ENCODE measurements at regions of chr1 and their contacts with region 1.

Region 1: GRCh38 chr1:160623862-160624261 is 23.0 kb downstream of the SLAMF1 start:
- DNase-seq: no peak
- ATAC-seq: no peak
- H3K4me3 ChIP-seq: peak overlapping the region in 1 of 5 experiments; percentile 58
- H3K4me3 Mint-ChIP-seq: peak overlapping the region; percentile 69
- H3K27ac ChIP-seq: peak overlapping the region; percentile 33 to 78
- H3K27ac Mint-ChIP-seq: peak overlapping the region; percentile 38
- H3K4me1 ChIP-seq: peaks cover 85 to 87% of the 10 kb centered on the region in 2 donors
- H3K4me1 Mint-ChIP-seq: peaks cover 94% of the 10 kb centered on the region
- H3K27me3 ChIP-seq: no peaks in the 10 kb centered on the region
- H3K27me3 Mint-ChIP-seq: no peaks in the 10 kb centered on the region
- CTCF ChIP-seq: no peak

Region 2: DNA sequence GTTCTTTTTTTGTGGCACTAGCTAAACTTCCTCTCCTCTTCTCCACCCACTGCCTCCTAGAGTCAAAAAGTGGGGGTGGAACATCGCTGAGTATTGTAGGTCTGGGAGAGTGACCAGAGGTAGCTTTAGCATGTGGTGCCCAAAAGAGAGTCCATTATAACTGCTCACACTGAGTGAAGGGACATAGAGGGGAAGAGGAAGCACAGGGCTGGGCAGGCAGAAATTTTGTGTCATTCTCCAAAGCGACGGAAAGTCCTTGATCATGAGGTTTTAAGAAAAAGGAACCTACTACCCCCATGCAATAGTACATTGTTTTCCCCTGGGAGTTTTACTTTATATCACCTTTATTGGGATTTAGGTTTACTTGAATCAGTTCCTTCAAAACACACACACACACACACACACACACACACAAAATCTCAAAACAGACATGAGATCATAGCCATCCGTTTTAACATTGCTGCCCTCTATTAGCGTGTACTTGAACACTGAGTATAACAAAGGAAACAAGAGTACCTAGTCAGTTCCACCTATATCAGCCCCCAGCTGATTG is 48.7 kb before region 1 on chr1:
- CTCF ChIA-PET with region 1: no interaction called
- POLR2A ChIA-PET with region 1: no interaction called
- intact Hi-C with region 1: no loop called
- DNase-seq: peak; percentile 78
- ATAC-seq: peak; percentile 74
- H3K4me3 ChIP-seq: peak overlapping the region in 3 of 5 experiments; percentile 9 to 89 (median 27)
- H3K4me3 Mint-ChIP-seq: peak overlapping the region; percentile 76
- H3K27ac ChIP-seq: peak overlapping the region; percentile 59 to 74
- H3K27ac Mint-ChIP-seq: peak overlapping the region; percentile 90
- H3K4me1 ChIP-seq: peaks cover 52 to 53% of the 10 kb centered on the region in 2 donors
- H3K4me1 Mint-ChIP-seq: peaks cover 76% of the 10 kb centered on the region
- H3K27me3 ChIP-seq: no peaks in the 10 kb centered on the region
- H3K27me3 Mint-ChIP-seq: no peaks in the 10 kb centered on the region
- CTCF ChIP-seq: no peak

Region 3: GRCh38 chr1:160637821-160638539 is 14.1 kb after region 1 on chr1:
- CTCF ChIA-PET with region 1: interaction called, 10 read pairs
- POLR2A ChIA-PET with region 1: interaction called, 10 read pairs
- intact Hi-C with region 1: loop called (anchors 1 kb)
- DNase-seq: peak; percentile 79
- ATAC-seq: peak; percentile 49
- H3K4me3 ChIP-seq: peak overlapping the region in 2 of 5 experiments; percentile 17 to 40
- H3K4me3 Mint-ChIP-seq: peak overlapping the region; percentile 65
- H3K27ac ChIP-seq: peak overlapping the region; percentile 72 to 83
- H3K27ac Mint-ChIP-seq: peak overlapping the region; percentile 88
- H3K4me1 ChIP-seq: peaks cover 70 to 82% of the 10 kb centered on the region in 2 donors
- H3K4me1 Mint-ChIP-seq: peaks cover 82% of the 10 kb centered on the region
- H3K27me3 ChIP-seq: no peaks in the 10 kb centered on the region
- H3K27me3 Mint-ChIP-seq: no peaks in the 10 kb centered on the region
- CTCF ChIP-seq: no peak

Region 4: DNA sequence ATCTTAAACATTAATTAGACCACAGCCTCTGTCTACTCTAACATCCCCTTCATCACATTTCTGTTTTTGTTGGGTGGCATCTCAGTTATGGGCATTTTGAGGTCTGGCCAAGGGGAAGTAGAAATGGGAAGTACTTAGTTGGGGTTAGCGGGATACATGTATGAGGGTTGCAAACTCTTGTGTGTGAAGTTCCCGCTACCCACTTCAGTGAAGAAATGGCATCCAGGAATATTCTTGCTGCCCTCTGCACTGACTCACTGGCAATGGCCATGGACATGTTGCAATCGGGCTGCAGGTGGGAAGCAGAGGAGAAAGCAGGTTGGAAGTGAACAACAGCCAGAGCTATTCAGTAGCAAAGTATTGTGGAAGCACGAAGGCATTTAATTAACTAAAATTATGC is 80.4 kb after region 1 on chr1:
- CTCF ChIA-PET with region 1: interaction called, 3 read pairs
- POLR2A ChIA-PET with region 1: interaction called, 10 read pairs
- intact Hi-C with region 1: no loop called
- DNase-seq: peak; percentile 74
- ATAC-seq: peak; percentile 51
- H3K4me3 ChIP-seq: peak overlapping the region in 2 of 5 experiments; percentile 22 to 99
- H3K4me3 Mint-ChIP-seq: peak overlapping the region; percentile 87
- H3K27ac ChIP-seq: peak overlapping the region; percentile 5 to 95
- H3K27ac Mint-ChIP-seq: peak overlapping the region; percentile 94
- H3K4me1 ChIP-seq: peaks cover 72 to 79% of the 10 kb centered on the region in 2 donors
- H3K4me1 Mint-ChIP-seq: peaks cover 67% of the 10 kb centered on the region
- H3K27me3 ChIP-seq: no peaks in the 10 kb centered on the region
- H3K27me3 Mint-ChIP-seq: no peaks in the 10 kb centered on the region
- CTCF ChIP-seq: no peak

Measured in B cell (primary cell).